ENCODE measurements at regions of chr16 and their contacts with region 1.

Region 1: DNA sequence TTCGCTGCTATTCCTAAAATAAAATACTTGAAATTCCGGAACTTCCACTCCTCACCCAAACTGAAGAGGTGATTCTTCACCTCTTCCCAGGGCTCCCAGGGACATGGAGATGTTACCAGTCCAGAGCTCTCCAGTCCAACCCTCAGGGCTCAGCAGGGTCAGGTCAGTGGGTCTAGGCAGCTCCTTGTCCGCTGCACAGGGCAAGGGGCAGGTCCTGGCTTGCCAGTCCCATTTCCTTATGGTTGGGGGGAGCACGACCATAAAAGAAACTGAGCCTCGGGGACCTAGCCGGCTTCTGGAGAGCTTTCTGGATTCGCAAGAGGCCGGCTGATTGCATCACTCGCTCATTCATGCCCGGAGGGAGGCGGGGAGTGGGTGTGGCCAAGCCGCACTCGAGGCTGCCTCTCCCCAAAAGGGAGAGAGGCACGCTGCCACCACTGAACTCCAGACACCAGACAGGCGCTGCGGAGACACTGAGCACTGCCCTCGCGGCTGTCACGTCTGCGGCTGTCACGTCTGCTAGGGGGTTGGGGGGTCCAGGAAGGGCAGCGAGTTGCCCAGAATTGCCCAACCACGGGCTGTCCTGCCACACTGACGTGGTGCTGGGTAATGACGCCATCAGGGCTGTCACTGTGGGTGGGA is 15.8 kb downstream of the SLC7A5 start:
- DNase-seq: peak; percentile 44 to 83 (median 60)
- ATAC-seq: peak; percentile 83
- H3K4me3 ChIP-seq: peak overlapping the region; percentile 18
- H3K4me3 Mint-ChIP-seq: peak overlapping the region in 9 of 10 donors; percentile 41 to 84 (median 65)
- H3K27ac ChIP-seq: peak overlapping the region; percentile 36
- H3K27ac Mint-ChIP-seq: peak overlapping the region in 5 of 9 donors; percentile 31 to 95 (median 74)
- H3K4me1 ChIP-seq: peaks cover 20 to 33% of the 10 kb centered on the region in 2 donors
- H3K4me1 Mint-ChIP-seq: peaks cover 9 to 60% (median 18%) of the 10 kb centered on the region in 7 donors
- H3K27me3 ChIP-seq: no peaks in the 10 kb centered on the region
- H3K27me3 Mint-ChIP-seq: no peaks in the 10 kb centered on the region

Region 2: GRCh38 chr16:87337262-87337771 is 516.2 kb before region 1 on chr16:
- CTCF ChIA-PET with region 1: no interaction called
- POLR2A ChIA-PET with region 1: no interaction called
- intact Hi-C with region 1: no loop called
- DNase-seq: no peak
- ATAC-seq: no peak
- H3K4me3 ChIP-seq: no peak overlapping the region
- H3K4me3 Mint-ChIP-seq: peak overlapping the region in 2 of 10 donors; percentile 41 to 64
- H3K27ac ChIP-seq: peak overlapping the region; percentile 2
- H3K27ac Mint-ChIP-seq: peak overlapping the region in 8 of 9 donors; percentile 12 to 92 (median 76)
- H3K4me1 ChIP-seq: peaks cover 0 to 7% of the 10 kb centered on the region in 2 donors
- H3K4me1 Mint-ChIP-seq: peaks cover 2 to 24% (median 19%) of the 10 kb centered on the region in 7 donors
- H3K27me3 ChIP-seq: no peaks in the 10 kb centered on the region
- H3K27me3 Mint-ChIP-seq: no peaks in the 10 kb centered on the region

Region 3: DNA sequence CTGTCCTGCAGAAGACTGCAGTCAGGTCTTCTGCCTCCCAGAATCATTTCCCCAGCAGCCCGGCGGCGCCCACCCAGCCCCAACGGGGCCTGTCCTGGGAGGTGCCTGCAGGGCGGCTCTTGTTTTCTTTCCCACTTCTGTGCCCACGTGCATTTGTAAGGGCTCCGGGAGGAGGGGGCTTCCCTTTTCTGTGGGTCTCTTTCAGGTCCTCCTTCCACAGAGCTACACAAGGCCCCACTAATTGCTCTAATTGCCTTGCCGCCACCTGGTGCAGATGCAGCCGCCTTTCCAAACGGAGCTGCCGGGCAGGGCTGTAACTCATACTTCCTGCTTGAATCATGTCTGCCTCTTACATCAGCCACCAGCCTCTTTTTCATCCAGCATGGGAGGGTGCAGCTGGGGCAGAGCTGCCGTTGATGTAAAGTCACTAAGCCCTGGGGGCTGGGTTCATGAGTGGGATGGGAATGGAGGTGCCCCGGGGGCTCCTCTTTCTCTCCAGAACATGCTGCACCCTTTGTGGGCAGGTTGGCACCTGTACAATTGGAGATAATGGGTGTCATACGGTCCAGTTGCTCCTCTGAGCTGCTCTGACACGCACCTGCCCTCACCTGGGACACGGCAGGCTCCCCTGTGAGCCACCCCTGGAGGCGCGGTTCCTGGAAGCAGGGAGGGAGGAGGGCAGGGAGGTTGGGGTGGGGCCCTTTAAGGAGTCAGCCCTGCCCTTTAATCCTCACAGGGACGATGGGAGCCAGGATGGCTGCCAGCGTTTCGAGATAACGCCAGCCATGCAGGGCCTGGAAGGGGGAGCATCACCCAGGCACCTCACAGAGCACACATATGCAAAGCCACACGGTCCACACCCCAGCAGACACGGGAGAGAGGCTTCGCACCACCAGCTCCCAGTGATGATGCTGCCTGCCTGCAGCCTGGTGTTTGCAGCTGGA is 46.7 kb before region 1 on chr16:
- CTCF ChIA-PET with region 1: interaction called, 6 read pairs
- POLR2A ChIA-PET with region 1: interaction called, 3 read pairs
- intact Hi-C with region 1: loop called in 1 of 2 experiments (anchors 5 kb)
- DNase-seq: peak in 8 of 9 donors; percentile 39 to 64 (median 58)
- ATAC-seq: peak; percentile 84
- H3K4me3 ChIP-seq: peak overlapping the region; percentile 57
- H3K4me3 Mint-ChIP-seq: peak overlapping the region; percentile 87 to 97 (median 89)
- H3K27ac ChIP-seq: peak overlapping the region; percentile 68
- H3K27ac Mint-ChIP-seq: peak overlapping the region; percentile 89 to 98 (median 96)
- H3K4me1 ChIP-seq: peaks cover 0 to 15% of the 10 kb centered on the region in 2 donors
- H3K4me1 Mint-ChIP-seq: peaks cover 11 to 38% (median 14%) of the 10 kb centered on the region in 7 donors
- H3K27me3 ChIP-seq: no peaks in the 10 kb centered on the region
- H3K27me3 Mint-ChIP-seq: peaks cover 0 to 5% (median 0%) of the 10 kb centered on the region in 5 donors

Region 4: DNA sequence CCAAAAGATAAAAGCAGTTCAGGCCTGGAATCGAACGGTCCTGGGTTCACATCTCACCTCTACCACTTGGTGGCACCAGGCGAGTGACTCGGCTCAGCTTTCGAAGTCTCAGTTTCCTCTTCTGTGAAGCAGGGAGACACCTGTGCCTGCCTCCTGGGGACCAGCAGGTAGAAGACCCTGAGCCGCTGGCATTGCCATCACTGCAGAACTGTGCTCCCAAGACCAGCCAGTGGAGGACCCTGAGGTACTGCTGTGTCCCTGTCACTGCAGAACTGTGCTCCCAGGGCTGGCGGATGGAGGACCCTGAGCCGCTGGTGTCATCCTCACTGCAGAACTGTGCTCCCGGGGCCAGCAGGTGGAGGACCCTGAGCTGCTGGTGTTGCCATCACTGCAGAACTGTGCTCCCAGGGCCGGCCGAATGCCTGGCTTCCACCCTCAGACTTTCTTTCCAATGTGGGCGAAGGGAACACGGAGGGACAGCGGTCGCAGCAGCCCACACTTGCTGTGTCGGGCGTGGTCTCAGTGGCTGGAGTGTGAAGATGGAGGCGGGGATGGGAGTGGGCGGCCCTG is 24.5 kb after region 1 on chr16:
- CTCF ChIA-PET with region 1: interaction called, 79 read pairs
- POLR2A ChIA-PET with region 1: no interaction called
- intact Hi-C with region 1: no loop called
- DNase-seq: no peak
- ATAC-seq: peak; percentile 8
- H3K4me3 ChIP-seq: no peak overlapping the region
- H3K4me3 Mint-ChIP-seq: no peak overlapping the region
- H3K27ac ChIP-seq: no peak overlapping the region
- H3K27ac Mint-ChIP-seq: peak overlapping the region in 2 of 9 donors; percentile 36 to 65
- H3K4me1 ChIP-seq: no peaks in the 10 kb centered on the region
- H3K4me1 Mint-ChIP-seq: peaks cover 0 to 35% (median 6%) of the 10 kb centered on the region in 7 donors
- H3K27me3 ChIP-seq: no peaks in the 10 kb centered on the region
- H3K27me3 Mint-ChIP-seq: peaks cover 0 to 8% (median 0%) of the 10 kb centered on the region in 5 donors

Measured in naive thymus-derived CD4-positive, alpha-beta T cell (primary cell).